ENCODE measurements at regions of chr11 and their contacts with region 1.

Region 1: GRCh38 chr11:66408488-66409214 is 12.2 kb upstream of the NPAS4 start:
- DNase-seq: peak; percentile 76 to 93
- H3K4me3 ChIP-seq: peak overlapping the region; percentile 19
- H3K4me3 Mint-ChIP-seq: peak overlapping the region; percentile 73
- H3K27ac Mint-ChIP-seq: no peak overlapping the region
- H3K4me1 ChIP-seq: no peaks in the 10 kb centered on the region
- H3K4me1 Mint-ChIP-seq: no peaks in the 10 kb centered on the region
- H3K27me3 ChIP-seq: no peaks in the 10 kb centered on the region
- H3K27me3 Mint-ChIP-seq: peaks cover 28% of the 10 kb centered on the region
- CTCF ChIP-seq: peak; percentile 99 to 100

Region 2: DNA sequence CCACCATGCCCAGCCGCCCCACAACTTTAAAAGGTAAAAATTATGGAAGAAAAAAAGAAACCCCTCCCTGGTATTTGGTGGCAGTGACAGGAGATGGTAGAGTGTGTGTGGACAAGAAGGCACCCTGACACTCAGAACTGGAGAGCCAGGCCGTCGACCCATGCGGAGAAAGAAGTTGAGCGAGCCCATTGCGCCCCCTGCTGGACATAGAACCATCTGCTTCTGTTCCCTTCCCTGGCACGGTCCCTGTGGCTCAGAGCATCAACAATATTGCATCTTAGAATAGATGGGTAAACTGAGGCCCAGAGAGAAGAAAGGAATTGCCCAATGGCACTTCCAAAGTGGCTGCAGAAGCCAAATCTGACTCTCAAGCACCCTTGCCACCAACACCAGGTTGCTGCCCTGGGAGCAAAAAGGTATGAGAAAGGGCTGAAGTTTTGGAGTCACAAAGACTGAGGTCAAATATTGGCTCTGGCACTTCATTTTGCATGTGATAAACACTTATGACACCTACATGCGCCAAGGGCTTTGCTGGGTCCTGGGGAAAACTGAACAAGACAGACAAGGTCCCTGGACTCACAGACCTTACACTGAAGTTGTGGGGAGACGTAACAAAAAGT is 21.4 kb after region 1 on chr11:
- CTCF ChIA-PET with region 1: interaction called, 6 read pairs
- POLR2A ChIA-PET with region 1: interaction called, 5 read pairs
- intact Hi-C with region 1: loop called (anchors 1 kb)
- DNase-seq: peak; percentile 78 to 85
- H3K4me3 ChIP-seq: no peak overlapping the region
- H3K4me3 Mint-ChIP-seq: no peak overlapping the region
- H3K27ac Mint-ChIP-seq: no peak overlapping the region
- H3K4me1 ChIP-seq: no peaks in the 10 kb centered on the region
- H3K4me1 Mint-ChIP-seq: no peaks in the 10 kb centered on the region
- H3K27me3 ChIP-seq: no peaks in the 10 kb centered on the region
- H3K27me3 Mint-ChIP-seq: no peaks in the 10 kb centered on the region
- CTCF ChIP-seq: peak; percentile 94 to 96